ENCODE measurements at regions of chr2 and their contacts with region 1.

Region 1: DNA sequence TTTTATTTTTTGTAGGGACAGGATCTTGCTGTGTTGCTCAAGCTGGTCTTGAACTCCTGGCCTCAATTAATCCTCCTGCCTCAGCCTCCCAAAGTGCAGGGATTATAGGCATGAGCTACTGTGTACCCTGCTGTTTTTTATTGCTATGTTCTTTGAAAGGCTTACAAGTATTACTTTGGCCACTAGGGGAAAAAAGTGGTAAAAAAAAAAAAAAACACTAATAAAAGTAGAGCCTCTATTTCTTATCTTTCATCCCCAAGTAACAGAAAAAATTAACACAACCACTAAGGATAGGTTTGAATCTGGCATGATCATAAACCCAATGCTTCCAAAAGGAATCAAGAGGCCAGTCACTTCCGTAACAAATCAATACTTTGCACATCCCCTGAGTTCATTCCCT is 11.6 kb downstream of the NOL10 start:
- DNase-seq: no peak
- H3K4me3 ChIP-seq: no peak overlapping the region
- H3K27ac ChIP-seq: no peak overlapping the region
- H3K4me1 ChIP-seq: no peaks in the 10 kb centered on the region
- H3K27me3 ChIP-seq: no peaks in the 10 kb centered on the region
- CTCF ChIP-seq: peak; percentile 57

Region 2: DNA sequence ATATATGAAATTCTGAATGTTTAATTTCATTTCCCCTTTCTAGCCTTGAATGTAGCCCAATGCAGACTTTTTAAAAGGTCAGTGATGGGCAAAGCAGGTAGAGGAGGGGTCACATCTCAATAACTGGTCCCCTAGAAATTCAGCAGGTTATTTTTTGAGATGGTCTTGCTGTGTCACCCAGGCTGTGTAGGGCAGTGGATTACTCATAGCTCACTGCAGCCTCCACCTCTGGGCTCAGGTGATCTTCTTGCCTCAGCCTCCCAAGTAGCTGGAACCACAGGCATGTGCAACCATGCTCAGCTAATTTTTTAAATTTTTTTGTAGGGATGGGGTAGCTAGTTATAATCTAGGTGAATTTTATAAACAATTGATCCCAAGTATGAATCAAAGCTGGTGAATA is 1195.1 kb before region 1 on chr2:
- CTCF ChIA-PET with region 1: no interaction called
- POLR2A ChIA-PET with region 1: interaction called, 16 read pairs
- intact Hi-C with region 1: no loop called
- DNase-seq: peak in 1 of 2 experiments; percentile 46
- H3K4me3 ChIP-seq: no peak overlapping the region
- H3K27ac ChIP-seq: peak overlapping the region; percentile 30; the same call in 1 of the 2 replicates
- H3K4me1 ChIP-seq: no peaks in the 10 kb centered on the region
- H3K27me3 ChIP-seq: no peaks in the 10 kb centered on the region
- CTCF ChIP-seq: no peak

Region 3: DNA sequence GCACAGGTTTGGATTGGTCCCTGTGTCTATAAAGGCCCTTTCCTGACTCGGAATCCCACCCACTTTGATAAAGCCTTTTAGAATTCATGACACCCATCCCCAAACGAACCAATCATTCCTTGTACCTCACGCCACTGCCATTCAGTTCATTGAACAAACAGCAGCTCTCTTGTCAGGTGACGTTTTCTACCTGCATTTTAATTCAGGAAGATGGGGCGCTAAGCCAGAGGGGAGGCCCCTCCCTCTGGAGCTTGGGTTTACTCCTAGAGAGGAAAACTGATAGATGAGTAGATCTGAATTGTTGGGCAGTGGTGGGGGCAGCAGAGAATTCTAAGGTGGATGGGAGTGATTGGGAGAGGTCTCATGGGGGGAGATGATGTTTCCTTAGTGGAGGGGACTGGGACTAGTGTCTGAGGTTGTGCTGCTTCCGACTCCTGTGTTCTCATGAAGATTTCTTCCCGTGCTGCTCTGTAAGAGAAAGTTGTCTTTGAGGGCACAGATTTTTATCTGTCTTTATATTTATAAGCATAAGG is 546.1 kb before region 1 on chr2:
- CTCF ChIA-PET with region 1: no interaction called
- POLR2A ChIA-PET with region 1: interaction called, 15 read pairs
- intact Hi-C with region 1: no loop called
- DNase-seq: no peak
- H3K4me3 ChIP-seq: no peak overlapping the region
- H3K27ac ChIP-seq: no peak overlapping the region
- H3K4me1 ChIP-seq: no peaks in the 10 kb centered on the region
- H3K27me3 ChIP-seq: no peaks in the 10 kb centered on the region
- CTCF ChIP-seq: no peak

Measured in PC-9 (cell line).